Gastrocnemius medialis (tissue), 4 donors: ENCODE measurements at regions of chr10 and their contacts with region 1.

Region 1: DNA sequence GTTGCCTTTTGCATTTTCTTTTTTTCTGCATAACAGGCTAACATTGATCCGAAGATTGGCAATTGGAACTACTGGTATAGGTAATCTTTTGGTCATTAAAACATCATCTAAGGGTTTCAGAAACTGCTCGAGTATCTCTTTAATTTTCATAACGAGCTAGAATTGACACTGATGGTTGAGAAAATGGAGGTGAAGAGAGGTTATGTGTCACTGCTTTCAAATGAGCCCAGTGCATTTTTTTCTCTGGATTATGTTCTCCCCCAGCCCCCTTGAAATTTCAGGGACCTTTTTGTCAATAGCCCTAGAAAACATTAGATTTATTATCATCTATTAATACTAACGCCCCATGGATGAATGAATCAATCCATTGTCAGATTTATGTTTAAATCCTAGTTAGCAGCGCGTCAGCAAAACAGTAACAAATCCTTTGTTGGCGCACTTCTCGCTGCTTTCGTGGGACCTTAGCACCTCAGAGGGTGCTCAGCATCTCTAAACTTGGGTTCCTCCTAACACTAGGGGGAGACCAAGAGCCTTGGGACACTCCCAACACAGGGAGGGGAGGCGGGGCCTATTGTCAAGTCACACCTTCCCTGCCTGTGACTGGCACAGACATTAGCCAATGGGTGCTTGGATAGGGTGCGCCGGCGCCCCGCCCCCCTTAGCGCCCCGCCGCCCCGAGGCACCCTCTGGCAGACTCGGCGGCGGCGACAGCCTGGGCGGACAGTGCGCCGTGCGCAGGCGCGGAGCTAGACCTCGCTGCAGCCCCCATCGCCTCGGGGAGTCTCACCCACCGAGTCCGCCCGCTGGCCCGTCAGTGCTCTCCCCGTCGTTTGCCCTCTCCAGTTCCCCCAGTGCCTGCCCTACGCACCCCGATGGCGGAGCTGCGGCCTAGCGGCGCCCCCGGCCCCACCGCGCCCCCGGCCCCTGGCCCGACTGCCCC is at the start of gene SUFU:
- DNase-seq: peak; percentile 98
- ATAC-seq: peak; percentile 62 to 68
- H3K4me3 ChIP-seq: peak within 1 kb of the TSS; percentile 89 to 97 (median 94)
- H3K27ac ChIP-seq: peak within 1 kb of the TSS; percentile 95 to 100 (median 98)
- H3K4me1 ChIP-seq: peaks cover 68 to 72% of the 10 kb centered on the region in 2 donors
- H3K27me3 ChIP-seq: no peaks in the 10 kb centered on the region
- CTCF ChIP-seq: peak; percentile 78 to 94 (median 92)
- POLR2A ChIP-seq: peak; percentile 73 to 79
- total RNA-seq, gene SUFU: 7.3 to 11.8 (median 7.9) TPM

Region 2: GRCh38 chr10:101818119-101818871 is 685.3 kb before region 1 on chr10 and contains the start of gene OGA:
- in situ Hi-C with region 1: no loop called
- intact Hi-C with region 1: loop called (anchors 5 kb)
- DNase-seq: peak; percentile 99 to 100
- ATAC-seq: peak; percentile 89 to 90
- H3K4me3 ChIP-seq: peak within 1 kb of the TSS; percentile 82 to 99 (median 98)
- H3K27ac ChIP-seq: peak within 1 kb of the TSS; percentile 93 to 100 (median 96)
- H3K4me1 ChIP-seq: peaks cover 31% of the 10 kb centered on the region in 2 donors
- H3K27me3 ChIP-seq: no peaks in the 10 kb centered on the region
- CTCF ChIP-seq: peak in 1 of 5 experiments; percentile 26
- POLR2A ChIP-seq: peak; percentile 99 to 100
- total RNA-seq, gene OGA: 25.8 to 85.5 (median 48.3) TPM

Region 3: DNA sequence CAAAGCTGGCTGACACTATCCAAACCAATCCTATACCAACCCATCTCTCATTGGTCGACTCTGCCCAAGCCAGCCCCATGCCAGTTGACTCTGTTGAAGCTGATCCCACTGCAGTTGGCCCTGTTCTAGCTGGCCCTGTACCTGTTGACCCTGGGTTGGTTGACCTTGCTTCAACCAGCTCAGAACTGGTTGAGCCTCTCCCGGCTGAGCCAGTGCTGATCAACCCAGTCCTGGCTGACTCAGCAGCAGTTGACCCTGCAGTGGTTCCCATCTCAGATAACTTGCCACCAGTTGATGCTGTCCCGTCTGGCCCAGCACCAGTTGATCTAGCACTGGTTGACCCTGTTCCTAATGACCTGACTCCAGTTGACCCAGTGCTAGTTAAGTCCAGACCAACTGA is 363.4 kb before region 1 on chr10:
- in situ Hi-C with region 1: no loop called
- intact Hi-C with region 1: no loop called
- DNase-seq: no peak
- ATAC-seq: no peak
- H3K4me3 ChIP-seq: no peak overlapping the region
- H3K27ac ChIP-seq: no peak overlapping the region
- H3K4me1 ChIP-seq: peaks cover 12 to 15% of the 10 kb centered on the region in 2 donors
- H3K27me3 ChIP-seq: no peaks in the 10 kb centered on the region
- CTCF ChIP-seq: no peak
- POLR2A ChIP-seq: no peak

Region 4: GRCh38 chr10:102245101-102245931 is 258.2 kb before region 1 on chr10 and contains the start of gene GBF1:
- in situ Hi-C with region 1: no loop called
- intact Hi-C with region 1: loop called (anchors 5 kb)
- DNase-seq: peak; percentile 92 to 96
- ATAC-seq: peak; percentile 83 to 87
- H3K4me3 ChIP-seq: peak within 1 kb of the TSS; percentile 74 to 96 (median 86)
- H3K27ac ChIP-seq: peak within 1 kb of the TSS; percentile 91 to 98 (median 93)
- H3K4me1 ChIP-seq: peaks cover 50 to 51% of the 10 kb centered on the region in 2 donors
- H3K27me3 ChIP-seq: no peaks in the 10 kb centered on the region
- CTCF ChIP-seq: no peak
- POLR2A ChIP-seq: peak; percentile 100
- total RNA-seq, gene GBF1: 31.4 to 64.2 (median 58.7) TPM

Region 5: GRCh38 chr10:102432162-102432950 is 71.2 kb before region 1 on chr10 and contains the start of gene CUEDC2:
- in situ Hi-C with region 1: no loop called
- intact Hi-C with region 1: loop called (anchors 2 kb)
- DNase-seq: peak; percentile 94 to 96
- ATAC-seq: peak; percentile 96 to 97
- H3K4me3 ChIP-seq: peak within 1 kb of the TSS; percentile 72 to 100 (median 95)
- H3K27ac ChIP-seq: peak within 1 kb of the TSS; percentile 78 to 91 (median 88)
- H3K4me1 ChIP-seq: peaks cover 6 to 12% of the 10 kb centered on the region in 2 donors
- H3K27me3 ChIP-seq: peaks cover 6 to 11% (median 9%) of the 10 kb centered on the region in 3 donors
- CTCF ChIP-seq: no peak
- POLR2A ChIP-seq: peak; percentile 31 to 58
- total RNA-seq, gene CUEDC2: 51.6 to 83.1 (median 70.2) TPM

Region 6: GRCh38 chr10:102596506-102596971 is 93.0 kb after region 1 on chr10:
- in situ Hi-C with region 1: loop called in 1 of 4 experiments (anchors 5 kb)
- intact Hi-C with region 1: loop called (anchors 5 kb)
- DNase-seq: peak in 1 of 2 donors; percentile 66
- ATAC-seq: peak; percentile 65 to 84
- H3K4me3 ChIP-seq: no peak overlapping the region
- H3K27ac ChIP-seq: peak overlapping the region; percentile 26 to 79 (median 60)
- H3K4me1 ChIP-seq: peaks cover 46 to 56% of the 10 kb centered on the region in 2 donors
- H3K27me3 ChIP-seq: no peaks in the 10 kb centered on the region
- CTCF ChIP-seq: peak; percentile 76 to 86 (median 79)
- POLR2A ChIP-seq: no peak

Region 7: DNA sequence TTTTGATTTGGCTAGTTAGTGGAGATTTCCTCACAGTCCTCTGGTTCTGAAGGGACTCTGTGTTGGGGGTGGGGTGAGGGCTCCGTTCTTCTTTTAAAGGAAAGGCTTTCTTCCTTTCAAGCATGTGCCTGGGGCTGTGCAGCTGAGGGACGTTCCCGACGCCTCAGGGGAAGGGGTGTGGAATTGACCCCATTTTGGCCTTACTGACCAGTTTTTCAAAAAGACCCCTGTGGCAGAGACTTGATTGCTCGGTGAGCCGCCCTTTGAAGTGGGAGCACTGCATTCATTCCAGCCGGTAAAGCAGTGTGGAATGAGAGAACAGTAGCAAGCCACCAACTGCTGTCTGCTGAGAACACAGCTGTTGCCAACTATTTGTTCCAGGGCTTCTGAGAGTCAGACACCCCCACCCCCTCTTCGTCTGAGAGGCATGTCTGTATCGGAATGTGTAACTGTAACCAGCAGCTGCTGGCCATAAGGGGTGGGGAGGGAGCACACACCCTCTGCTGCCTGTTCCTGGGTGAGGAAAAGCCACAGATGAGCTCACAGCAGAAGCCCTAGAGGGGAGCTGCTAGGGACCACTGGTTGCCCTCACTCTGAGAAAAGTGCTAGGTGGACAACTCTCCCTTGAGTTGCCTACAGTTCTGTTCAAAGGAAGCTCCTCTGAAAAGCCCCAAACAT is 273.4 kb after region 1 on chr10:
- in situ Hi-C with region 1: no loop called
- intact Hi-C with region 1: loop called (anchors 10 kb)
- DNase-seq: peak; percentile 97 to 98
- ATAC-seq: peak; percentile 46 to 51
- H3K4me3 ChIP-seq: peak overlapping the region; percentile 65 to 78 (median 70)
- H3K27ac ChIP-seq: peak overlapping the region; percentile 91 to 100 (median 96)
- H3K4me1 ChIP-seq: peaks cover 72 to 80% of the 10 kb centered on the region in 2 donors
- H3K27me3 ChIP-seq: no peaks in the 10 kb centered on the region
- CTCF ChIP-seq: peak in 1 of 5 experiments; percentile 8
- POLR2A ChIP-seq: peak in 1 of 2 donors; percentile 90